Common myeloid progenitor, CD34-positive (primary cell): ENCODE measurements at regions of chr12 and their contacts with region 1.

Region 1: DNA sequence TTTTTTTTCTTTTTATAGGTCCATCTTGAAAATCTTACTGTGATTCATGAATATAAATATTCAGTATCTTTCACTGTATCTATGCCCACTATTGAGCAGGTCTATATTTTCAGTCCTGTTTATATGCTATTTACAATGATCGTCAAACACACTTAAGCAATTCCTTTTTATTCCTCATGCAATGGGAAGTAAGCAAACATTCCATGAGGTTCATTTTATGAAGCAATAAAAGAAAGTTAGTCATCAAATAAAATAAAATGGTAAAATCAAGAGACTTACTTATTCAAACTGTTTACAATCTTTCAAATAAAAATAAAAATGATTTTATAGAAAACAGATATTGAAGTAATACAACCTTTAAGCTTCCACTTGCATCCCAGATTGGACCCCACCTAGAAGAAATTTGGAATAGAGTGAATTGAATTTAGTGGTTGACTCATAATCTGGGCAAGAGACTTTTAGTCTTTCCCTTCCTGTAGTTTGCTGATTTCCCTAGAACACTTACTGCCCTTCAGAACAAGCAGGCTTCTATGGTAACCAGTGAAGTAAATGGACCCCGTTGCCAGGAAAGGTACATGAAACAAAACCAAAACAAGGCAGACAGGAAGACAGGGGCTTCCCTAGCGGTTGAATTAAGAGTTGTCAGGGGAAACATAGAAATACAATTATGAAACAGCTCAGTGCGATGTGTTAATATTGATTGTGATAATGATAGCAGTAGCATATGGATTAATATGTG is 241.0 kb upstream of the ATP2B1 start:
- DNase-seq: peak; percentile 94 to 95 (median 95)
- H3K4me3 ChIP-seq: peak overlapping the region in 1 of 7 experiments; percentile 27
- H3K27ac ChIP-seq: peak overlapping the region; percentile 91 to 92
- H3K4me1 ChIP-seq: peaks cover 11 to 53% (median 22%) of the 10 kb centered on the region in 4 experiments
- H3K27me3 ChIP-seq: no peaks in the 10 kb centered on the region

Region 2: DNA sequence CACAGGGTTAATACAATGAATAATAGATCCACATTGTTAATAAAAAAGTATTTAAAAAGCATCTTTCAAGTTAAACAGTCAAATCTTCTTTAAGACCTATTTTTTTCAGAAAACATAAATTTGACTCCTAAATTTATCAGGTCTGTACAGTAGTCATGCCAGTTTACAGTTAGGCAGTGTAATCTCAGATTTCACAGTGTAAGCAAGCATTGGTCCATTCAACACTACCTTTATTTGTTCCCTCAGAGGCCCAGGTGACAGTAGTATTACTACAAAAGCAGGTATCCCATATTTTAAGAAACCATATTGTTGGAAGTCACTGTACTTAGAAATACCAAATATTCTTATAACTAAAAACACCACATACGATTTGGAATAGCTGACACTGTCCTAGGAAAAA is 247.1 kb before region 1 on chr12:
- CTCF ChIA-PET with region 1: no interaction called
- POLR2A ChIA-PET with region 1: no interaction called
- DNase-seq: no peak
- H3K4me3 ChIP-seq: no peak overlapping the region
- H3K27ac ChIP-seq: no peak overlapping the region
- H3K4me1 ChIP-seq: peaks cover 3 to 13% (median 8%) of the 10 kb centered on the region in 4 experiments
- H3K27me3 ChIP-seq: no peaks in the 10 kb centered on the region

Region 3: GRCh38 chr12:89962648-89963047 is 13.0 kb after region 1 on chr12:
- CTCF ChIA-PET with region 1: interaction called, 14 read pairs
- POLR2A ChIA-PET with region 1: no interaction called
- DNase-seq: peak in 2 of 3 donors; percentile 47 to 53
- H3K4me3 ChIP-seq: no peak overlapping the region
- H3K27ac ChIP-seq: no peak overlapping the region
- H3K4me1 ChIP-seq: no peaks in the 10 kb centered on the region
- H3K27me3 ChIP-seq: no peaks in the 10 kb centered on the region

Region 4: GRCh38 chr12:90024287-90024686 is 74.7 kb after region 1 on chr12:
- CTCF ChIA-PET with region 1: no interaction called
- POLR2A ChIA-PET with region 1: no interaction called
- DNase-seq: no peak
- H3K4me3 ChIP-seq: no peak overlapping the region
- H3K27ac ChIP-seq: no peak overlapping the region
- H3K4me1 ChIP-seq: peaks cover 0 to 4% (median 0%) of the 10 kb centered on the region in 4 experiments
- H3K27me3 ChIP-seq: no peaks in the 10 kb centered on the region